ENCODE measurements at regions of chr6 and their contacts with region 1.

Region 1: GRCh38 chr6:43334466-43335095 is 26.0 kb upstream of the CRIP3 start:
- DNase-seq: peak in 1 of 35 experiments; percentile 42
- ATAC-seq: no peak
- H3K4me3 ChIP-seq: no peak overlapping the region
- H3K4me3 Mint-ChIP-seq: no peak overlapping the region
- H3K27ac ChIP-seq: no peak overlapping the region
- H3K27ac Mint-ChIP-seq: peak overlapping the region in 1 of 2 donors; percentile 67
- H3K4me1 ChIP-seq: peaks cover 4 to 5% of the 10 kb centered on the region in 2 experiments
- H3K4me1 Mint-ChIP-seq: peaks cover 18 to 28% (median 24%) of the 10 kb centered on the region in 3 donors
- H3K27me3 ChIP-seq: no peaks in the 10 kb centered on the region
- H3K27me3 Mint-ChIP-seq: no peaks in the 10 kb centered on the region

Region 2: DNA sequence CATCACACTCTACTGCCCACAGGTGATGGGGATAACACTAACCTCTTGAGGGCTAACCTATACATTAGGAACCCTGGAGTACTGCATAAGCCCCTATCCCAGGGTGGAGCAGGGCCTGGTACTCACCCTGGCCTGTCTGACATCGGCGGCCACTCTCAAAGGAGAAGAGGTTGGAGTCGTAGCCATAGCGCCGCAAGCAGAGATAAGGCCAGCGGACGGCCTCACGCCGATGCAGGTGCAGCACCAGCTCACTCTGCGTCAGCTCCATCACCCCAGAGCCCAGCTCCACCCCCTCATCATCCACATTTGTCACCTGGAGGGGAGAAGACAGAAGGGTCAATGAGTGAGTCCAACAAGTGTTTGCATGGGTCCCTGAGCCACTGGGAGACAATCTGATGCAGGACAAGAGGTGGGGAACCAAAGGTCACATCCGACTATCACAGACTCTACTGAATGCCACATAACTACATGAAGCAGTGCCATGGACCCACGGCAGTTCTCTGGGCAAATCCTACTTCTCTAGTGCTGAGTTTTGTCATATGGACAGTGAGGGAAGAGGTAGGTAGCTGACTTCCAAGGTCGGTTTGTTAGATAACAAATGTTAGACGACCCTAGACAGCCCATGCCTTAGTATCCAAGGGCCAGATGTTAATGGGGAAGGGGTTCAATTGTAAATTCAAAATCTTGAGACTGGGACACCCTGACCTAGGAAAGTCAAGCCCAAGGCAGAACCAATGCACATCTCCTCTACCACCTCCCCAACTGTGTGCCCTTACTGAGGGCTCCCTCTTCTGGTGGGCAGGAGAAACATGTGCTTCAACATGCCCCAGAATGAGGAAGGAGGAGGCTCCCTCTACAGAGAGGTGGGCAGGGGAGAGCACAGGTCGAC is 1559.0 kb before region 1 on chr6:
- CTCF ChIA-PET with region 1: no interaction called
- POLR2A ChIA-PET with region 1: interaction called in 1 of 2 experiments, 12 read pairs
- DNase-seq: peak in 20 of 35 experiments; percentile 13 to 64 (median 20)
- ATAC-seq: no peak
- H3K4me3 ChIP-seq: no peak overlapping the region
- H3K4me3 Mint-ChIP-seq: no peak overlapping the region
- H3K27ac ChIP-seq: no peak overlapping the region
- H3K27ac Mint-ChIP-seq: no peak overlapping the region
- H3K4me1 ChIP-seq: peaks cover 5 to 13% of the 10 kb centered on the region in 2 experiments
- H3K4me1 Mint-ChIP-seq: peaks cover 8 to 13% (median 10%) of the 10 kb centered on the region in 3 donors
- H3K27me3 ChIP-seq: peaks cover 0 to 4% of the 10 kb centered on the region in 2 experiments
- H3K27me3 Mint-ChIP-seq: peaks cover 0 to 1% of the 10 kb centered on the region in 2 donors

Region 3: GRCh38 chr6:43369174-43370022 is 34.8 kb after region 1 on chr6 and contains the start of gene ZNF318:
- CTCF ChIA-PET with region 1: no interaction called
- POLR2A ChIA-PET with region 1: no interaction called
- DNase-seq: peak; percentile 88 to 97 (median 92)
- ATAC-seq: peak; percentile 95 to 97 (median 96)
- H3K4me3 ChIP-seq: peak within 1 kb of the TSS; percentile 82 to 84
- H3K4me3 Mint-ChIP-seq: peak within 1 kb of the TSS; percentile 84 to 88 (median 87)
- H3K27ac ChIP-seq: peak within 1 kb of the TSS; percentile 82
- H3K27ac Mint-ChIP-seq: peak within 1 kb of the TSS; percentile 93 to 96
- H3K4me1 ChIP-seq: peaks cover 12 to 38% of the 10 kb centered on the region in 2 experiments
- H3K4me1 Mint-ChIP-seq: peaks cover 42 to 52% (median 51%) of the 10 kb centered on the region in 3 donors
- H3K27me3 ChIP-seq: no peaks in the 10 kb centered on the region
- H3K27me3 Mint-ChIP-seq: no peaks in the 10 kb centered on the region
- total RNA-seq, gene ZNF318: 24.3 to 33.5 (median 26.2) TPM

Measured in T-cell (primary cell).